ENCODE measurements at regions of chr22 and their contacts with region 1.

Region 1: DNA sequence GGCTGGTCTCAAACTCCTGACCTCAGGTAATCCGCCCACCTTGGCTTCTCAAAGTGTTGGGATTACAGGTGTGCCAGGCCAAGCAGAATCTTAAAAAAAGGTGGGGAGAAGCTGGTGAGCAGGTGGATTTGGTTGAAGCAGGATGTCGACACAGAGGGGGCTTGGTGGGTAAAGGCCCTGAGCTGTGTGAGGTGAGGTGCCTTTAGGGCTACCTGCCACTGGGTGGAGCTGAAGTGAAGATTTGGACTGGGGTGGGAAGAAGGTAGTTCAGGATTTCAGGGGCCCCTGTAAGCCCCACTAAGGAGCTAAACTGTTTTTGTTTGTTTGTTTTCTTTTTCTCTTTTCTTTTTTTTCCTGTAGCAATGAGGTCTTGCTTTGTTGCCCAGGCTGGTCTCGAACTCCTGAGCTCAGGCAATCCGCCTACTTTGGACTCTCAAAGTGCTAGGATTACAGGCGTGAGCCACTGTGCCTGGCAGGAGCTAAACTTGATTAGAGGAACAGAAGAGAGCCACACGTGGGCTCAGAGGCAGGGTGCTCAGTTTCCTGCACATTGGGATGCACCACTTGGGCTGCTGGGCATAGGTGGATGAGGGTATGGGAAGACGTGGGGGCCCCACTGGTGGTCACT is 6.0 kb downstream of the P2RX6 start:
- DNase-seq: no peak
- H3K4me3 ChIP-seq: no peak overlapping the region
- H3K27ac ChIP-seq: no peak overlapping the region
- H3K4me1 ChIP-seq: peaks cover 11% of the 10 kb centered on the region
- H3K27me3 ChIP-seq: no peaks in the 10 kb centered on the region
- CTCF ChIP-seq: peak; percentile 53 to 67

Region 2: DNA sequence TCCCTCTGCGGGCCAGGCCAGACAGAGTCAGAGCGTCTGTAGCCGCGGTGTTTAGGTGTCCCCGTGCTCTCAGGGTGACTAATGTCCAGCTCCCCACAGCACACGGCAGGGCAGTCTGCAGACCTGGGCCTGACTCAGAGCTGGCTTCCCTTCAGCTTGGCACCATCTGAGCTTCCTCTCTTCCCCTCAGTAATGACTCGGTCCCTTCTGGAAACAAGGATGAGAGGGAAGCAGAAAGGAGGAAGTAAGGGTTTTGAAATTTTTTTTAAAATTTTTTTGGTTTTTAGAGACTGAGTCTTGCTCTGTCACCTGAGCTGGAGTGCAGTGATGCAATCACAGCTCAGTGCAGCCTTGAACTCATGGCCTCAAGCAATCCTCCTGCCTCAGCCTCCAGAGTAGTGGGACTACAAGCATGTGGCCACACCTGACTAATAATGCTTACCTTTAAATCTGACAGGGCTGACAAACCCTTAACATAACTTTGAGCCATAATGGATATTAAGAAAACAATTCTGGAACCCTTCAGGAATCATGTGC is 53.3 kb after region 1 on chr22:
- CTCF ChIA-PET with region 1: no interaction called
- dilution Hi-C with region 1: no loop called
- in situ Hi-C with region 1: no loop called
- intact Hi-C with region 1: loop called (anchors 10 kb)
- DNase-seq: peak; percentile 77
- H3K4me3 ChIP-seq: no peak overlapping the region
- H3K27ac ChIP-seq: no peak overlapping the region
- H3K4me1 ChIP-seq: peaks cover 18% of the 10 kb centered on the region
- H3K27me3 ChIP-seq: no peaks in the 10 kb centered on the region
- CTCF ChIP-seq: no peak

Measured in mammary epithelial cell (primary cell).